ENCODE measurements at regions of chr9 and their contacts with region 1.

Region 1: GRCh38 chr9:34646211-34647083 is at the start of gene GALT:
- DNase-seq: peak; percentile 97
- H3K4me3 Mint-ChIP-seq: peak within 1 kb of the TSS; percentile 78
- H3K27ac Mint-ChIP-seq: peak within 1 kb of the TSS; percentile 76
- H3K4me1 Mint-ChIP-seq: peaks cover 36% of the 10 kb centered on the region
- H3K27me3 Mint-ChIP-seq: no peaks in the 10 kb centered on the region
- total RNA-seq, gene GALT: 95.2 to 95.6 TPM

Region 2: DNA sequence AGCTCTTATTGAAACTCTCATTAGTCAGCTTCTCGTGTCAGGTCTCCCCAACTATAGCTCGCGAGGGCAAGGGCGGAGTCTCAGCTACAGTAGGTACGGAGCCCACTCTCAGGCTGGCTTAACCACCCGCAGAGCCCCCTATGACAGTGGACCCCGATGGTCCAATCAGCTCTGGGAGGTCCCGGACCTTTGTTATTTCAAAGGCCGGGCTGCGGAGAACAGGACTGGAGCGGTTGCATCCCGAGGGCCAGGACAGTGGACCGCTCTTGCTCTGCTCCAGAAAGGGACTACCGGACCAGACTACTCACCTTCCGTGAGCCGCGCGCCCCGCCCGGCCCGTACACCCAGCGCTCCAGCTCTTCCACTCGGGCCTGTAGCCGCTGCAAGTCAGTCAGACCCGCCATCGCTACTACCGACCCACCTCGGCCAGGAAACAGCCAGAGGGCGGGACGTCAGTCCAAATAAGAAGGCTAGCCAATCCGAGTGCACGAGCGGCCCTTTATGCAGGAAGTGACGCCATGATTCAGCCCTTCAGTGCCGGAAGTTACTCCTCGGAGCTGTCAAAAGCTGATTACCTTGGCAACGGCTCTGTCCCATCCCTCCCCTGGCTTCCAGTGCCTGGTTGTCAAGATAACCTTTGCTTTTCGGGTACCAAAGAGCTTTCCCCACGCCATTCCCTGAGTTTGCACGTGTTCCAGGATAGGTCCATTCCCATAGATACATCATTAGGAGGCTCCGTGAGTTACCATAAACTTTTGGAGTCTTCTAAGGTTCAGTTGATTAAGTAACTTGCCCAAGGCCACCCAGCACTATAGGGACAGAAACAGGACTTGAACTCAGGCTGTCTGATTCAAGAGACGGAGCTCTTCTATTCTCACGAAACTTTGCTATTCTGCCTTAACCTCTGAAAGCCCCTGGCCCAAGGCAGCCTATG is 26.1 kb before region 1 on chr9 and contains the start of gene DCTN3:
- CTCF ChIA-PET with region 1: interaction called, 7 read pairs
- POLR2A ChIA-PET with region 1: interaction called, 15 read pairs
- DNase-seq: peak; percentile 94
- H3K4me3 Mint-ChIP-seq: peak within 1 kb of the TSS; percentile 86
- H3K27ac Mint-ChIP-seq: peak within 1 kb of the TSS; percentile 75
- H3K4me1 Mint-ChIP-seq: peaks cover 33% of the 10 kb centered on the region
- H3K27me3 Mint-ChIP-seq: peaks cover 28% of the 10 kb centered on the region
- total RNA-seq, gene DCTN3: 143 to 144 TPM

Region 3: GRCh38 chr9:34701769-34702736 is 55.6 kb after region 1 on chr9:
- CTCF ChIA-PET with region 1: interaction called, 18 read pairs
- POLR2A ChIA-PET with region 1: no interaction called
- DNase-seq: peak; percentile 79
- H3K4me3 Mint-ChIP-seq: peak overlapping the region; percentile 62
- H3K27ac Mint-ChIP-seq: no peak overlapping the region
- H3K4me1 Mint-ChIP-seq: peaks cover 9% of the 10 kb centered on the region
- H3K27me3 Mint-ChIP-seq: peaks cover 19% of the 10 kb centered on the region